Activated T-helper 1 cell treated with anti-CD3 and anti-CD28 coated beads, Interleukin-12 subunit alpha, Interleukin-12 subunit beta, Interleukin-2, Interleukin-4 antibody, amounts not matched to agents 30 ng/mL and 10 ng/mL and 1 ng/mL, durations not matched to agents 14 hours and 24 hours and 36 hours (primary cell): ENCODE measurements at regions of chr10 and their contacts with region 1.

Region 1: GRCh38 chr10:51389415-51390321 is 309.7 kb downstream of the CSTF2T start:
- DNase-seq: peak; percentile 19
- H3K4me3 Mint-ChIP-seq: no peak overlapping the region
- H3K27ac Mint-ChIP-seq: no peak overlapping the region
- H3K4me1 Mint-ChIP-seq: no peaks in the 10 kb centered on the region
- H3K27me3 Mint-ChIP-seq: no peaks in the 10 kb centered on the region

Region 2: DNA sequence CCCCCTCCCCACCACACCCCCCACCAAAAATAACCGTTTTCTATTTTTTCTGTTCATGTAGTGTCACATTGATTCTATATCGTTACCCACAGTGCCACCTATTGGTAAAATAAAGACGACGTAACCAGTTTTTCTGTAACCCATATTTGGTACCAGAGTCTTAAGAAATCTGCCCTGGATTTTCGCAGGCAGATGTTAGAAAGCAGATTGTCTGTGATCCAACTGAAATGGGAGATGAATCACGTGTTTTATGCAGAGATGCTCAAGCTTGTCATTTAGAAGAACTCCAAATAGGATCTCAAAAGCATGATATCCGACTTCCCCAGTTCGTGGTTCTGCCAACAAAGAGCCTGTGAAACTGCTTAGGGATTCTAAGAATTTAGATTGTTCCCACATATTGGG is 570.8 kb after region 1 on chr10:
- intact Hi-C with region 1: loop called (anchors 1 kb)
- DNase-seq: no peak
- H3K4me3 Mint-ChIP-seq: no peak overlapping the region
- H3K27ac Mint-ChIP-seq: no peak overlapping the region
- H3K4me1 Mint-ChIP-seq: no peaks in the 10 kb centered on the region
- H3K27me3 Mint-ChIP-seq: peaks cover 7% of the 10 kb centered on the region

Region 3: GRCh38 chr10:52004342-52004949 is 614.8 kb after region 1 on chr10:
- intact Hi-C with region 1: loop called (anchors 1 kb)
- DNase-seq: no peak
- H3K4me3 Mint-ChIP-seq: no peak overlapping the region
- H3K27ac Mint-ChIP-seq: no peak overlapping the region
- H3K4me1 Mint-ChIP-seq: no peaks in the 10 kb centered on the region
- H3K27me3 Mint-ChIP-seq: no peaks in the 10 kb centered on the region

Region 4: DNA sequence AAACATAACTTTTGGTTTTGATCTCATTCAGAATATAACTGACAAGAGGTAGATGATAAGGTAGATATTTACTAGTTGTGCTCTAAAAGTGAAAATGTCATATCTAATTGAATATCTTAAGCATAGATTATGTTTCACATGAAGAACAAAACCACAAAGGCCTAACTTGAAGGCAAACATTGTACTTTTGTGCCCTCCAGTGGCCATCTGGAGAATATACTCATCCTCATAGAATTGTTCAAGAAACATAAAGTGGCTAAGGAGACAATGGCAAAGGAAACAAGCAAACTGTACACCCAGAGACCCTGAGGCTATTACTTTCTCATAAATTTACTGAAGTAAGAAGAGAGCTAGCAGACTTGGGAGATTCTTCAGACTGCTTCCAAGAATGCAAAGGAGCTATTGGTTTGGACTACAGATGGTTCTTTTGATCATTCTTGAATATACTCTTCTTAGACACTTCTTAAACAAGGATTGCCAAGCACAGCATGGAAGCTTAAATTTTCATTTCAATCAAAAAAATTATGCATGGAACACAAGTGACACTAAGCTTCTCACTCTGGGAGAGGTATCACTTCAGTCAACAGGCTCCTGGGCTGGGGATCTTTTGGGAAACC is 826.2 kb after region 1 on chr10:
- intact Hi-C with region 1: loop called (anchors 1 kb)
- DNase-seq: peak; percentile 14
- H3K4me3 Mint-ChIP-seq: no peak overlapping the region
- H3K27ac Mint-ChIP-seq: no peak overlapping the region
- H3K4me1 Mint-ChIP-seq: no peaks in the 10 kb centered on the region
- H3K27me3 Mint-ChIP-seq: peaks cover 3% of the 10 kb centered on the region